PC-9 (cell line): ENCODE measurements at regions of chr1 and their contacts with region 1.

Region 1: DNA sequence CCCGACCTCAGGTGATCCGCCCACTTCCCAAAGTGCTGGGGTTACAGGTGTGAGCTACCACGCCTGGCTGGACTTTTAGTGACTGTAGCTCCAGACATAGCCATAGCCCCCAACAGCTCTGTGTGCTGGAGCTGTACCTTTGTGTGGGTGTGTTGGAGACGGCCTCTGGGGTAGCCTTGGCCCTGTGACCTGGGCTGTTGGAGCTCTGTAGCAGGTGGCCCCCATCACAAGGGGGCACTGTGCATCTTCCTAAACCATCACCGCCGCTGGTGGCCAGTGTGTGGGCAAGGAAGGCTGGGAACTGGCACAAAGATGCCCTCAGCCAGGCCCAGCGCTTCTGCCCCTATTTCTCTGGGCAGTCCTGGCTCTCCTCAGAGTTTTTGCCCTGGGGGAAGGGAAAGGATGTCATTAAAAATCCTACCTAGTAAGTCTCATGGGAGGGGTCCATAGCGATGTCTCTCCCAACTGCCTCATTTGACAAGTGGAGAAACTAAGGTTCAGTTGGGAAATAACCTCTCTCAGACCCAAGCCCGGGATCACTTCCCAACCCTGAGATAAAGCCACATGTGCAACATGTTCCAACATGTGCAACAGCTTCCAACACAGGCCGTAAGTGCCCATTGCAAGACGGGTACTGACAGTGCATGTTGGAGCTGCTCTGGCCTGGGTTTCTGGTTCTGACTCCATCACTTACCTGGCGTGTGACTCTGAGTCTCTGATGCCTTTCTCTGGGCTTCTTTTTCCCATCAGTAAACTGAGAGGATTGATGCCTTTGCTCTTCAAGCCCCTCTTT is 38.2 kb upstream of the FOXO6 start:
- DNase-seq: peak; percentile 60 to 82
- H3K4me3 ChIP-seq: no peak overlapping the region
- H3K27ac ChIP-seq: no peak overlapping the region
- H3K4me1 ChIP-seq: peaks cover 15% of the 10 kb centered on the region
- H3K27me3 ChIP-seq: no peaks in the 10 kb centered on the region
- CTCF ChIP-seq: peak; percentile 84

Region 2: GRCh38 chr1:41268154-41268770 is 54.8 kb before region 1 on chr1:
- CTCF ChIA-PET with region 1: no interaction called
- POLR2A ChIA-PET with region 1: no interaction called
- intact Hi-C with region 1: loop called (anchors 5 kb)
- DNase-seq: peak; percentile 50 to 81
- H3K4me3 ChIP-seq: no peak overlapping the region
- H3K27ac ChIP-seq: no peak overlapping the region
- H3K4me1 ChIP-seq: no peaks in the 10 kb centered on the region
- H3K27me3 ChIP-seq: no peaks in the 10 kb centered on the region
- CTCF ChIP-seq: peak; percentile 96

Region 3: GRCh38 chr1:41282679-41283317 is 40.2 kb before region 1 on chr1:
- CTCF ChIA-PET with region 1: no interaction called
- POLR2A ChIA-PET with region 1: no interaction called
- intact Hi-C with region 1: loop called (anchors 2 kb)
- DNase-seq: peak in 1 of 2 experiments; percentile 54
- H3K4me3 ChIP-seq: no peak overlapping the region
- H3K27ac ChIP-seq: no peak overlapping the region
- H3K4me1 ChIP-seq: no peaks in the 10 kb centered on the region; the same call in 1 of the 2 replicates
- H3K27me3 ChIP-seq: peaks cover 6% of the 10 kb centered on the region; the same call in 1 of the 2 replicates
- CTCF ChIP-seq: peak; percentile 87

Region 4: DNA sequence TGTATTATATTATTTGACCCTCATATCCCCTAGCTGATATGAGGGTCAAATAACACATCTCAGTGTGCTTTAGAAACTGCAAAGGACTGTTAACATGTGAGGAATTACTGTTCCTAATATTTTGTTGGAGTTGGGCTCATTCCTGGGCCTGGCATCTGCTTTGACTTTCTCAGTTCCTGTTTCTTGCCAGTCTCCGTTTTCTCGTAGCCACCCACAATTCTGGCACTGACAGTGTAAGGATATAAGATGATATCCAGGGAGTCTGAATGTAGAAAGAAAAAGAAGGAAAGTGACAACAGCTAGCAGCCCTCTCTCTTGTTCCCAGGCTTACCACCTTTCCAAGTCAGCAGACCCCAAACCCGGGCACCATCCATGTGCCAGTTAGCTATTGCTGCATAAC is 26.5 kb before region 1 on chr1:
- CTCF ChIA-PET with region 1: no interaction called
- POLR2A ChIA-PET with region 1: no interaction called
- intact Hi-C with region 1: no loop called
- DNase-seq: no peak
- H3K4me3 ChIP-seq: no peak overlapping the region
- H3K27ac ChIP-seq: no peak overlapping the region
- H3K4me1 ChIP-seq: no peaks in the 10 kb centered on the region
- H3K27me3 ChIP-seq: peaks cover 20% of the 10 kb centered on the region; the same call in 1 of the 2 replicates
- CTCF ChIP-seq: no peak

Region 5: DNA sequence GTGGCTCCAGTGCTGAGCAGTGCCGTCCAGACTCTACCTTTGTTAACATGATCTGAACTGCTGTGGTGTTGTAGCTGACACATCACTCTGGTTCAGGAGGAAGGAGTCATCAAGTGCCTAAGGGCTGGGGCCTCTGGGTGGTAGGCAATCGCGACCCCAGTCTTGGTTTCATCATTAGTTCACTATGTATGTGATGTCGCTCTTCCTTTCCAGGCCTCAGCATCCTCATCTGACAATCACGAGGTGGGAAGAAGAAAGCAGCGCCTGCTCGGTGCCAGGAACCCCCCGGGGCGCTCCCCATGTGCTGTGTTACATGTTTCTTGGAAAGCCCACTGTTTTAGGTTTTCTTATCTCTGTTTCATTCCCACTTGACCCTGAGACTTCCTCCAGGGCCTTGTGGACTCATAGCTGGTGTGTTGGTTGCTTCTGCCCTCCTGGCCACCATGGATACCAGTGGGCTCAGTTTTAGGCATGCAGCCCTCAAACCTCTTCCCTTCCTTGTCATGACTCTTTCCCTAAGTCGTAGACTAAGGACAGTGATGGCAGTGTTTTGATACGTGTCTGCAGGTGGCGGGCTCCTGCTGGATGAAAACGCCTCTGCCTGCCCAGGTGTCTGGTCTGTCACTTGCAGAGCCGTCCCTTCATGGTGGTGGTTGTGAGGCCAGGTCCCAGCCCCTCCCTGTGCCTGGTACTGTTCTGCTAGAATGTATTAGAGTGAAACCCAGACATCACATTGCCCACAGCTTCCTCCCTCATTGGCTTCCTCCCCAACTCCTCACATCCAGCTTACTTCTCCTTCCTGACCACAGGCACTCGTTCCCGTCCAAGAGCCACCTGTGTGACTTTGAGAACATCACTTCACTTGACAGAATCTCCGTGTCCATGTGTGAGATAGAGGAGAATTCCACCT is 21.0 kb after region 1 on chr1:
- CTCF ChIA-PET with region 1: interaction called, 3 read pairs
- POLR2A ChIA-PET with region 1: no interaction called
- intact Hi-C with region 1: loop called (anchors 2 kb)
- DNase-seq: peak in 1 of 2 experiments; percentile 35
- H3K4me3 ChIP-seq: no peak overlapping the region
- H3K27ac ChIP-seq: no peak overlapping the region
- H3K4me1 ChIP-seq: peaks cover 64% of the 10 kb centered on the region
- H3K27me3 ChIP-seq: no peaks in the 10 kb centered on the region
- CTCF ChIP-seq: no peak

Region 6: DNA sequence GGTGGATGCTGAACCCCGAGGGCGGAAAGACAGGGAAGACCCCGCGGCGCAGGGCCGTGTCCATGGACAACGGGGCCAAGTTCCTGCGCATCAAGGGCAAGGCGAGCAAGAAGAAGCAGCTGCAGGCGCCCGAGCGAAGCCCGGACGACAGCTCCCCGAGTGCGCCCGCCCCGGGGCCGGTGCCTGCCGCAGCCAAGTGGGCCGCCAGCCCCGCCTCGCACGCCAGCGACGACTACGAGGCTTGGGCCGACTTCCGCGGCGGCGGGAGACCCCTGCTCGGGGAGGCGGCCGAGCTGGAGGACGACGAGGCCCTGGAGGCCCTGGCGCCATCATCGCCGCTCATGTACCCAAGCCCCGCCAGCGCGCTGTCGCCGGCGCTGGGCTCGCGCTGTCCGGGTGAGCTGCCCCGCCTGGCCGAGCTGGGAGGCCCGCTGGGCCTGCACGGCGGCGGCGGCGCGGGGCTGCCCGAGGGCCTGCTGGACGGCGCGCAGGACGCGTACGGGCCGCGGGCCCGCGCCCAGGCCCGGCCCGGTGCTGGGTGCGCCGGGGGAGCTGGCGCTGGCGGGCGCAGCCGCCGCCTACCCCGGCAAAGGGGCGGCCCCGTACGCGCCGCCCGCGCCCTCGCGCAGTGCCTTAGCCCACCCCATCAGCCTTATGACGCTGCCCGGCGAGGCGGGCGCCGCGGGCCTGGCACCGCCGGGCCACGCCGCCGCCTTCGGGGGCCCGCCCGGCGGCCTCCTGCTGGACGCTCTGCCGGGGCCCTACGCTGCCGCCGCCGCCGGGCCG is 58.9 kb after region 1 on chr1:
- CTCF ChIA-PET with region 1: no interaction called
- POLR2A ChIA-PET with region 1: no interaction called
- intact Hi-C with region 1: loop called (anchors 2 kb)
- DNase-seq: peak in 1 of 2 experiments; percentile 81
- H3K4me3 ChIP-seq: peak overlapping the region; percentile 91
- H3K27ac ChIP-seq: peak overlapping the region; percentile 82
- H3K4me1 ChIP-seq: peaks cover 28% of the 10 kb centered on the region
- H3K27me3 ChIP-seq: no peaks in the 10 kb centered on the region
- CTCF ChIP-seq: no peak

Region 7: DNA sequence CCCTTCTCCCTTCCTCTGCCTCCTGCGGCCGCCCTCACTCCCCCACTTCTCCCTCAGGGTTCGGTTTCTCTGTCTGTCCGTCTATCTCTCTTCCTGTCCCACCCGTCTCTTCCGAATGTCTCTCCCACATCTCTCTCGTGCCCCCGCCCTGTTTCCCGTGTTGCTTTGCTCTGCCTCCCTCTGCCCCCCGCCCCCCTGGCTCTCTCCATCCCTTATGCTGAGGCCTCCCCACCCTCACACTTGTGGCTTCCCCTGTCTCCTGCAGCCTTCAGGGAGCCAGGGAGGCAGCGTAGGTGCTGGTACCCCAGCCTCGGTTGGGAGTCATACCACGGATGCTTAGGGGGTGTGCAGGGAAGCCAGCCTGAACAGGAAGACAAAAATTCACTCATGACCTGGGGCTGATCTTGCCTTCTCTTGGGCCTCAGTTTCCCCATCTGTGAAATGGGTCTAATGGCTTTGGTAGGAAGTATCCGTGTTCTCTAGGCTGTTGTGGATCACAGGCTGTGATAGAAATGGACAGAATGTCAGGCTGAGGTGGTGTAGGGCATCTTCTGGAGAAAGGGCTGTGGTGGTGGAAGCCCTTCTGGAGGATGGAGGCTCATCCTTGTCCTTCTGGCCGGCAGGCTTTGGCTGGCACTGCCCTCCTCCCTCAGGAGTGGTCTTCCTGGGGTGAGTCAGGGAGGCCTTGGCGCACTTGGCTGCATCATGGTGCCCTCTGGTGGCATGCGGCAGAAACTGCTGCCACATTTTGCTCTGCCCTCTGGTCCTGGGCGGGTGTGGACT is 93.7 kb after region 1 on chr1:
- CTCF ChIA-PET with region 1: interaction called, 10 read pairs
- POLR2A ChIA-PET with region 1: interaction called, 3 read pairs
- intact Hi-C with region 1: loop called (anchors 1 kb)
- DNase-seq: peak; percentile 73 to 81
- H3K4me3 ChIP-seq: no peak overlapping the region
- H3K27ac ChIP-seq: no peak overlapping the region
- H3K4me1 ChIP-seq: peaks cover 39% of the 10 kb centered on the region
- H3K27me3 ChIP-seq: no peaks in the 10 kb centered on the region
- CTCF ChIP-seq: peak; percentile 95

Region 8: DNA sequence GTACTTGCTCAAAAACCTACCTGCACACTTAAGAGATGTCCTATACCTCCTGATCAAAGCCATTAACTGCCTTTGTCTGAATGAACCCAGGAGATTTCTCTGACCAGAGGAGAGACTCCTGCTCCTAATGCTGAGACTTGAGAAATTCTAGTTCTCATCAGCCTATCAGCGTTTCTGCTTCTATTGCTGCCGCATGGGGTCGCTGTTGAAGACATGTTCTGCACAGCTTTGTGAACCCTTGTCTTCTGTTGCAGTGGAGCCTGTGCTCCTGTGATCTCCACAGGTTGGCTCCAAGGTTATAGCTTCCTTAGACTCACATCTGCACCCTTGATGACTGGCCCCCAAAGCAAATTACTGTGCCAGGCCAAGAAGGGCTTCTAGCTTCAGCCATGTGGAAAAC is 121.2 kb after region 1 on chr1:
- CTCF ChIA-PET with region 1: no interaction called
- POLR2A ChIA-PET with region 1: interaction called, 17 read pairs
- intact Hi-C with region 1: no loop called
- DNase-seq: no peak
- H3K4me3 ChIP-seq: no peak overlapping the region
- H3K27ac ChIP-seq: no peak overlapping the region
- H3K4me1 ChIP-seq: peaks cover 11% of the 10 kb centered on the region; the same call in 1 of the 2 replicates
- H3K27me3 ChIP-seq: no peaks in the 10 kb centered on the region
- CTCF ChIP-seq: peak; percentile 57

Region 9: DNA sequence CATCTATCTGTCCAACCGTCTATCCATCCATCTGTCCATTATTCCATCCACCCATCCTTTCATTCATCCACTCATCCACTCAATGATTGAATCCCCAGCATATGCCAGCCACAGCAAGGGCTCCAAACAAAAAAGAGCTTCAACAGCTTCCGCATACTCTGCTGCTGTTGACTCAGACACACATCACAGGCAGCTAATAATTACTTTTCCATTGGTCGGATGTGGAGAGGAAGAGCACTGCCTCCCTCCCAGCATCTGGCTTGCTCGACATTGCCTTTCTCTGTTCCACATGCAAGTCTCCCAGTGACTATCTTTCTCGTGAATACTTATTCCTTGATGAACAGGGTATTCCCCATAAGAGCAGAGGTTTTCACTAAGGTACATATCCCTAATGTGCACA is 419.2 kb after region 1 on chr1:
- CTCF ChIA-PET with region 1: no interaction called
- POLR2A ChIA-PET with region 1: no interaction called
- intact Hi-C with region 1: no loop called
- DNase-seq: no peak
- H3K4me3 ChIP-seq: no peak overlapping the region
- H3K27ac ChIP-seq: no peak overlapping the region
- H3K4me1 ChIP-seq: no peaks in the 10 kb centered on the region
- H3K27me3 ChIP-seq: no peaks in the 10 kb centered on the region
- CTCF ChIP-seq: no peak

Region 10: DNA sequence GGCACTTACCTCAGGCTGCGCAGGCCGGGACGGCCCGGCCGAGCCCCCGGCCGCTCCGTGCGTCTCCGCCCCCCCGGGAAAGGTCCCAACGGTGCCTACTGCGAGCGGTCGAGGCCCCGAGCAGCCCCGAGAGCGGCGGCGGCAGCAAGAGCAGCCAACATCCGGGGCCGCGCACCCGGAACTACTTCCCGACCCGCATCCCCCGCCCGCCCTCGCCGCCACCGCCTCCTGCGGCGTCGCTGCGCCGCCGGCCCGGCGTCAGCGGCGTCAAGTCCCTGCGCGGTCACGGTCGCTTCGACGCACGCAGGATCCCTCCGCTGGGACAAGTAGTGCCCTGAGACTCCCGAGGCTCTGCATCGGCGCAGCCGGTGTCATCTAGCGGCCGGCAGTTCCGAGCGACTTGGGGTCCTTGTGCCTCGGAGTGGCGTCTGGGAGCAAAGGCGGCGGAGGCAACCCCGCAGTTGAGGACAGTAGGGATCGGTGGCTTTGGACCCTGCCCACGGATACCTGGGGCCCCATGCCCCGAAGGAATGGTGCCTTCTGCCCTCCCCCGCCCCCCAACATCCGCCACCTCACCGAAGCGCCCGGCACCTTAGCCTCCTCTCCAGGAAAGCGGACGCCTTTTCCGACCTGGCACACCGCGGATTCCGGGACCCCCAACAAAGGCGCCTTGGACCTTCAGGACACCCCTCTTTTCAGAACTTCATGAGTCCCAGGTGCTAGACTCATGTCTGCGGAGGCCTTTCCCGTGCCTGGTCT is 1012.2 kb after region 1 on chr1 and contains the start of gene FOXJ3:
- CTCF ChIA-PET with region 1: no interaction called
- POLR2A ChIA-PET with region 1: no interaction called
- intact Hi-C with region 1: no loop called
- DNase-seq: peak; percentile 84 to 94
- H3K4me3 ChIP-seq: peak within 1 kb of the TSS; percentile 85
- H3K27ac ChIP-seq: peak within 1 kb of the TSS; percentile 84
- H3K4me1 ChIP-seq: peaks cover 58% of the 10 kb centered on the region
- H3K27me3 ChIP-seq: no peaks in the 10 kb centered on the region
- CTCF ChIP-seq: no peak
- total RNA-seq, gene FOXJ3: 46.7 and 60.4 TPM in 2 replicates